ENCODE measurements at regions of chr2 and their contacts with region 1.

Region 1: GRCh38 chr2:85354286-85355072 is at the starts of genes ELMOD3 and RETSAT:
- DNase-seq: peak; percentile 81 to 97 (median 96)
- H3K4me3 ChIP-seq: peak within 1 kb of the TSS; percentile 58 to 100 (median 88)
- H3K27ac ChIP-seq: peak within 1 kb of the TSS in 57 of 59 donors; percentile 23 to 95 (median 83)
- H3K27me3 ChIP-seq: no peaks in the 10 kb centered on the region
- CTCF ChIP-seq: peak in 41 of 56 donors; percentile 8 to 57 (median 33)
- total RNA-seq, gene ELMOD3: 17.1 to 43.7 (median 29.2) TPM
- total RNA-seq, gene RETSAT: 19.8 to 54.2 (median 39.0) TPM

Region 2: DNA sequence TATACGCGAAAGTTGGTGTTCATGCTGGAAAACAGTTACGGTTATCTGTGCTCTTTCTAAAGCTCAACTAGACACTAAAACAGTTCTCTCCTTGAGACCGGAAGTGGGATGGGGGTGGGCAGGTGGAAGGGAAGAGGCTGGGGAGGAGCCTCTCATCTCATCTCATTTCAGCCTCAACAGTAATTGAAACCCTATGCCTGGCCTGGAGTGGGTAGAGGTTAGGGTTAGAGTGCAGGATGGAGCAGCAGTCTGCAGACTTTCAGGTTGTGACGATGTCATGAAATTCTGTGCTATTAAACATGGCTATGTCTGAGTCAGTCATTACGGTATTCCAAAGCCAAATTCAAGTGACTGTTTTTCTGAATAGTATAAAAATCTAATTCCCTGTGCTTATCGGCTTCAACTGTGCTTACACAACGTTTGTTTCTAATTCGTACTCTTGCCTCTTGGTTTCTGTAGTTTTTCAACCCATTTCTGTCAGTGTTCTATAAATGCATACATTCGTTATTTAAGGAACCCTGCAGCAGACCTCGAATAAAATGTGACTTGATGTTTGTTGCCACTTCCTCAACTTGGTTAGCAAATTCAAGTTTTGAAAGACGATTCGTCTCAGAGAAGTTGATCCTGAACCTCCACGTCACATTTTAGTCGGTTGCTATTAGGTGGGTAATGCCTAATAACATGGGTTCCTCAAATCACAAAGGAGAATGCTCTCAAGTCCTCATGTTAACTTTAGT is 297.1 kb before region 1 on chr2:
- intact Hi-C with region 1: no loop called
- DNase-seq: no peak
- H3K4me3 ChIP-seq: peak overlapping the region in 17 of 59 donors; percentile 0 to 36 (median 19)
- H3K27ac ChIP-seq: peak overlapping the region in 2 of 59 donors; percentile 27 to 46
- H3K27me3 ChIP-seq: no peaks in the 10 kb centered on the region
- CTCF ChIP-seq: no peak

Region 3: GRCh38 chr2:85327822-85328617 is 26.5 kb before region 1 on chr2 and contains the start of gene TGOLN2:
- intact Hi-C with region 1: loop called (anchors 1 to 2 kb)
- DNase-seq: peak; percentile 75 to 94 (median 89)
- H3K4me3 ChIP-seq: peak within 1 kb of the TSS; percentile 44 to 94 (median 79)
- H3K27ac ChIP-seq: peak within 1 kb of the TSS; percentile 72 to 100 (median 96)
- H3K27me3 ChIP-seq: no peaks in the 10 kb centered on the region
- CTCF ChIP-seq: peak in 44 of 56 donors; percentile 3 to 62 (median 32)
- total RNA-seq, gene TGOLN2: 90.8 to 148 (median 114) TPM

Region 4: DNA sequence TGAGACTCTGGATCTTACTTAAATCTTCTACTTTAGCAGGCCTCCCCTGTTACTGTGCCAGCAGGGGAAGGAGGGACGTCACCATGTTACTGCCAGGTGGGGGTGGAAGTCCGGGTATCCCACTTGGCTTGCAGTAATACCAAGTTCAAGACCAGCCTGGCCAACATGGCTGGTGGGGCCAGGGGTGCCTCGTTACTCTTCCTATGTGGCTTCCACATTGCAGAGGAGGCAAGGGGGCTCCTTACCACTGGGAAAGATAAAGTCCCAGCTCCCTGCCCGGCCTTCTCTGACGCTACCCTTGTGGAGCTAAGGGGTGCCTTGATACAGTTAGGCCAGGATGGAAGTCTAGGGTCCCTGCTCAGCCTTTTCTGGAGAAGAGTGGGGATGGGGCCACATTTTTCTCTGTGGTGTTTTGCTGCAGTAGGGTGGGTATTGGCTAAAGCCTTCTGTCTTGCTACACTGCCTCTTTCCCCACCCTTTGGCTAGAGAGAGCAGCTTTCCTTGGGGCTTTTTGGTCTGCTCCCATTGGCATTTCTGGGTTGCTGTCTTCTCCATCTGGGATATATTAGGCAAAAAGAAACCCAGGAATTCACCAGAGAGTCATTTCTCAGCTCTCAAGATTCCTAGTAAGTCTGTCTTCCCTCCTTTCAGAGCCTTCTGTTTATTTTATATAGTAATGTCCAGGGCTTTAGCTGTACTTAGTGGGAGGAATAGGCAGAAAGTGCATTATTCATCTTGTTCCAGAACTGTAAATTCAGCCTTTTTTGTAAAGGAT is 22.0 kb after region 1 on chr2:
- intact Hi-C with region 1: no loop called
- DNase-seq: no peak
- H3K4me3 ChIP-seq: no peak overlapping the region
- H3K27ac ChIP-seq: no peak overlapping the region
- H3K27me3 ChIP-seq: no peaks in the 10 kb centered on the region
- CTCF ChIP-seq: no peak

Region 5: GRCh38 chr2:85551698-85552678 is 197.5 kb after region 1 on chr2:
- intact Hi-C with region 1: loop called (anchors 5 to 10 kb)
- DNase-seq: peak; percentile 65 to 88 (median 80)
- H3K4me3 ChIP-seq: no peak overlapping the region
- H3K27ac ChIP-seq: peak overlapping the region in 49 of 59 donors; percentile 13 to 73 (median 50)
- H3K27me3 ChIP-seq: no peaks in the 10 kb centered on the region
- CTCF ChIP-seq: peak; percentile 84 to 99 (median 96)

Region 6: DNA sequence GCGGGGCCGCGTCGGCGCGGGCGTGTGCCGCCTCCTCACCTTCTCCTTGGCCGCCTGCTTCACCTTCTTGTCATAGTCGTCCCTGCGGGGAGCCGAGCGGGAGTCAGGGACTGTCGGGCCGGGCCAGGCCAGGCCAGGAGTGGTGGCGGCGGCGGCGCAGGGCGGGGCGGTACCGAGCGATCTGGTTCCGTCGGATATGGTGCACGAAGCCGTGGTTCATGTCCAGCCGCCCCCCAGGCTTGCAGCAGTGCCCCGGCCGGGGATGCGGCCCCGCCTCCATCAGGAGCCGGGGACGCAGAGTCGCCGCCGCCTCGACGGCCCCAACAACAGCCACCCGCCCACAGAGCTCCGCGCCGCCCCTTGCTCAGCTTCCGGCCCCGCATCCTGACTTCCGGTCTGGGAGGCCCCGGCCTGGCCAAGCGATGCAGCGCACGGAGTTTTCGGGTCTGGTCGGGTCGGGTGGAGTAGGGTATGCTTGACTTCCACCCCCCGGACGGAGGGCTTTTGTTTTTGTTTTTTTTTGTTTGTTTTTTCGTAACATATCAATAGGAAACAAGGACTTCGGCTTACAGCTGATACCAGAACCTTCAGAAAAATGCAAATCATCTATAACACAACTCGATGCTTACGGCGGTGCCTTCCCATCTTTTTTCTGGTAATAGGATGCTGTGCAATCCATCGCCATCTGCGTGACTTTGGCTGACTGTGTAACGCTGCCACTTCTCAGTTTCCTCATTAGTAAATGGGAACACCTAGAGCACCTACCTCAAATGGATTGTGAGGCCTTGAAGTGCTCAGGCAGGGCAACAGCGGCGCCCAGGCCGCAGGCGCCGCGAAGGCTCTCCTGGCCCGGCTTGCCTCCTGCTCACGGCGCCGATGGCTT is 257.5 kb after region 1 on chr2 and contains the start of gene C2orf68:
- intact Hi-C with region 1: loop called in 1 of 2 experiments (anchors 10 kb)
- DNase-seq: peak; percentile 77 to 95 (median 85)
- H3K4me3 ChIP-seq: peak within 1 kb of the TSS; percentile 63 to 97 (median 86)
- H3K27ac ChIP-seq: peak within 1 kb of the TSS; percentile 36 to 92 (median 84)
- H3K27me3 ChIP-seq: no peaks in the 10 kb centered on the region
- CTCF ChIP-seq: peak in 20 of 56 donors; percentile 8 to 44 (median 18)
- total RNA-seq, gene C2orf68: 10.2 to 50.7 (median 21.9) TPM